HepG2 (cell line): ENCODE measurements at regions of chr3 and their contacts with region 1.

Region 1: GRCh38 chr3:52291508-52292181 is 4.0 kb downstream of the GLYCTK start:
- DNase-seq: no peak
- ATAC-seq: no peak
- H3K4me3 ChIP-seq: peak overlapping the region; percentile 78 to 97 (median 85); a peak in 5 of 6 replicates
- H3K27ac ChIP-seq: no peak overlapping the region
- H3K4me1 ChIP-seq: peaks cover 42% of the 10 kb centered on the region
- H3K27me3 ChIP-seq: no peaks in the 10 kb centered on the region; a peak in 1 of 5 replicates
- CTCF ChIP-seq: peak; percentile 93
- EP300 ChIP-seq: no peak
- POLR2A ChIP-seq: no peak
- RAD21 ChIP-seq: peak; percentile 86

Region 2: GRCh38 chr3:52238761-52239701 is 52.6 kb before region 1 on chr3 and contains the start of gene TWF2:
- CTCF ChIA-PET with region 1: no interaction called
- POLR2A ChIA-PET with region 1: interaction called, 126 read pairs
- in situ Hi-C with region 1: no loop called
- intact Hi-C with region 1: loop called (anchors 5 kb)
- DNase-seq: peak; percentile 56
- ATAC-seq: peak; percentile 78
- H3K4me3 ChIP-seq: peak within 1 kb of the TSS; percentile 79 to 100 (median 98)
- H3K27ac ChIP-seq: peak within 1 kb of the TSS; percentile 68
- H3K4me1 ChIP-seq: peaks cover 53% of the 10 kb centered on the region
- H3K27me3 ChIP-seq: no peaks in the 10 kb centered on the region; a peak in 1 of 5 replicates
- CTCF ChIP-seq: peak; percentile 59
- EP300 ChIP-seq: no peak
- POLR2A ChIP-seq: no peak; a peak in 1 of 4 replicates
- RAD21 ChIP-seq: no peak
- total RNA-seq, gene TWF2: 45.5 and 49.1 TPM in 2 replicates

Region 3: GRCh38 chr3:52270252-52270754 is 21.3 kb before region 1 on chr3:
- CTCF ChIA-PET with region 1: no interaction called
- POLR2A ChIA-PET with region 1: interaction called, 3 read pairs
- in situ Hi-C with region 1: no loop called
- intact Hi-C with region 1: loop called (anchors 2 kb)
- DNase-seq: no peak
- ATAC-seq: no peak
- H3K4me3 ChIP-seq: no peak overlapping the region
- H3K27ac ChIP-seq: no peak overlapping the region
- H3K4me1 ChIP-seq: peaks cover 45% of the 10 kb centered on the region
- H3K27me3 ChIP-seq: no peaks in the 10 kb centered on the region
- CTCF ChIP-seq: no peak
- EP300 ChIP-seq: no peak
- POLR2A ChIP-seq: no peak
- RAD21 ChIP-seq: no peak

Region 4: DNA sequence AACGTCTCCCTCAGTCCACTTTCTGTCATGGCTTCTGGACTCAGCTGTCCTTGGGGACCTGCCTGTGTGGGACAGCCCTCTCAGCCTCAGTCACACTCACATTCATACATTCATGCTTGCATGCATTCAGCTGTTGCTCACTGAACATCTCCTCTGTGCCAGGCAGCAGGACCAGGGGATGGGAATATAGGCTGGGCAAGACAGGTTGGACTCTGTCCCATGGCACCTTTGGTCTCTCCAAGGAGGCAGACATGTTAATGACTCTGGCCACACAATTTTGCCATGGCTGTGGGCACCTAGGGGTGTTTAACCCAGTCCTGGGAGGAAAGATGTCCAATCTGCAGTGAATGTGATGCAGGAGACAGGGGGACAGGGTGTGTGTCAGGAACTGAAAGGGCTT is 16.7 kb after region 1 on chr3:
- CTCF ChIA-PET with region 1: no interaction called
- POLR2A ChIA-PET with region 1: interaction called, 26 read pairs
- in situ Hi-C with region 1: no loop called
- intact Hi-C with region 1: no loop called
- DNase-seq: no peak
- ATAC-seq: peak; percentile 21
- H3K4me3 ChIP-seq: no peak overlapping the region
- H3K27ac ChIP-seq: peak overlapping the region; percentile 56
- H3K4me1 ChIP-seq: peaks cover 61% of the 10 kb centered on the region
- H3K27me3 ChIP-seq: no peaks in the 10 kb centered on the region
- CTCF ChIP-seq: no peak
- EP300 ChIP-seq: no peak
- POLR2A ChIP-seq: no peak
- RAD21 ChIP-seq: no peak

Region 5: GRCh38 chr3:52339612-52340011 is 48.0 kb after region 1 on chr3:
- CTCF ChIA-PET with region 1: interaction called, 49 read pairs
- POLR2A ChIA-PET with region 1: interaction called, 10 read pairs
- in situ Hi-C with region 1: no loop called
- intact Hi-C with region 1: loop called (anchors 1 kb)
- DNase-seq: peak; percentile 85
- ATAC-seq: no peak; the same call in 1 of the 3 replicates
- H3K4me3 ChIP-seq: no peak overlapping the region
- H3K27ac ChIP-seq: no peak overlapping the region
- H3K4me1 ChIP-seq: peaks cover 7% of the 10 kb centered on the region
- H3K27me3 ChIP-seq: no peaks in the 10 kb centered on the region
- CTCF ChIP-seq: peak; percentile 87
- EP300 ChIP-seq: no peak
- POLR2A ChIP-seq: no peak
- RAD21 ChIP-seq: peak; percentile 88

Region 6: GRCh38 chr3:52357151-52358080 is 65.8 kb after region 1 on chr3:
- CTCF ChIA-PET with region 1: no interaction called
- POLR2A ChIA-PET with region 1: no interaction called
- in situ Hi-C with region 1: no loop called
- intact Hi-C with region 1: no loop called
- DNase-seq: no peak
- ATAC-seq: no peak
- H3K4me3 ChIP-seq: no peak overlapping the region
- H3K27ac ChIP-seq: no peak overlapping the region
- H3K4me1 ChIP-seq: no peaks in the 10 kb centered on the region
- H3K27me3 ChIP-seq: no peaks in the 10 kb centered on the region; a peak in 1 of 5 replicates
- CTCF ChIP-seq: no peak
- EP300 ChIP-seq: no peak
- POLR2A ChIP-seq: no peak
- RAD21 ChIP-seq: no peak

Region 7: GRCh38 chr3:52385157-52385556 is 93.5 kb after region 1 on chr3:
- CTCF ChIA-PET with region 1: interaction called, 5 read pairs
- POLR2A ChIA-PET with region 1: no interaction called
- in situ Hi-C with region 1: loop called (anchors 5 kb)
- intact Hi-C with region 1: loop called (anchors 5 kb)
- DNase-seq: peak; percentile 42
- ATAC-seq: peak; percentile 48
- H3K4me3 ChIP-seq: no peak overlapping the region
- H3K27ac ChIP-seq: no peak overlapping the region
- H3K4me1 ChIP-seq: no peaks in the 10 kb centered on the region
- H3K27me3 ChIP-seq: peaks cover 0 to 5% of the 10 kb centered on the region in 2 experiments; a peak in 2 of 5 replicates
- CTCF ChIP-seq: peak; percentile 64
- EP300 ChIP-seq: no peak
- POLR2A ChIP-seq: no peak
- RAD21 ChIP-seq: no peak

Region 8: DNA sequence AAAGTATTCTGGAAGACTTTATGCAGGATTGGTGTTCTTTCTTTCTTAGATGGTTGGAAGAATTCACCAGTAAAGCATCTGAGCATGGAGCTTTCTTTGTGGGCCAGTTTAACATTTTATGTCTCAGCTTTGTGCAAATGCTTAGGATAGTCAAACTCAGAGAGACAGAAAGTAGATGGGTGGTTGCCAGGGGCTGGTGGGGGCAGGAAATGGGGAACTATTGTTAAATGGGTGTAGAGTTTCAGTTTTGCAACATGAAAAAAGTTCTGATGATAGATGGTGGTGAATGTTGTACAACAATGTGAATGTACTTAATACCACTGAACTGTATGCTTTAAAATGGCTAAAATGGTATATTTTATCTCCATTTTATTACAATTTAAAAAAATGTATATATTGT is 439.0 kb after region 1 on chr3:
- CTCF ChIA-PET with region 1: no interaction called
- POLR2A ChIA-PET with region 1: no interaction called
- in situ Hi-C with region 1: no loop called
- intact Hi-C with region 1: no loop called
- DNase-seq: no peak
- ATAC-seq: no peak
- H3K4me3 ChIP-seq: no peak overlapping the region
- H3K27ac ChIP-seq: no peak overlapping the region
- H3K4me1 ChIP-seq: no peaks in the 10 kb centered on the region
- H3K27me3 ChIP-seq: no peaks in the 10 kb centered on the region
- CTCF ChIP-seq: no peak
- EP300 ChIP-seq: no peak
- POLR2A ChIP-seq: no peak
- RAD21 ChIP-seq: no peak